Transverse colon (tissue), 4 donors: ENCODE measurements at regions of chr4 and their contacts with region 1.

Region 1: DNA sequence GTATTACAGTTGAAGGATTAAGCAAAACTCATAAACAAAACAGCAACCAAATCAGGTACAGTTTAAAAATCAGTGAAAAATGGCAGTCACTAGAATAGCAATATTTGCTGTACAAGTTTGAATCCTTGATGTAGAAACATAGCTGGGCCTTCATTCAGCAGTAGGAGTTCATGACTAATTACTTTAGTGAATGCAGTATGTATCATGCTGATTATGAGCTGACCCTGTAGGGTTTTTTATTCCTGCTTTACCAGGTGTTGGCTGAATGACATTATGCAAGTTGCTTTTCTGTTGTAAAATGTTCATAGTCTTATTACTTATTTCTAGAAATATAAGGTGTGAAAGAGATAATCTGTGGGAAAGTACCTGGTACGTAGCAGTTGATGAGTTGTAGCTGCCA is 179.6 kb downstream of the CCSER1 start:
- DNase-seq: no peak
- H3K4me3 ChIP-seq: no peak overlapping the region
- H3K27ac ChIP-seq: no peak overlapping the region
- H3K4me1 ChIP-seq: no peaks in the 10 kb centered on the region
- H3K27me3 ChIP-seq: no peaks in the 10 kb centered on the region
- CTCF ChIP-seq: no peak
- EP300 ChIP-seq: no peak
- POLR2A ChIP-seq: no peak

Region 2: DNA sequence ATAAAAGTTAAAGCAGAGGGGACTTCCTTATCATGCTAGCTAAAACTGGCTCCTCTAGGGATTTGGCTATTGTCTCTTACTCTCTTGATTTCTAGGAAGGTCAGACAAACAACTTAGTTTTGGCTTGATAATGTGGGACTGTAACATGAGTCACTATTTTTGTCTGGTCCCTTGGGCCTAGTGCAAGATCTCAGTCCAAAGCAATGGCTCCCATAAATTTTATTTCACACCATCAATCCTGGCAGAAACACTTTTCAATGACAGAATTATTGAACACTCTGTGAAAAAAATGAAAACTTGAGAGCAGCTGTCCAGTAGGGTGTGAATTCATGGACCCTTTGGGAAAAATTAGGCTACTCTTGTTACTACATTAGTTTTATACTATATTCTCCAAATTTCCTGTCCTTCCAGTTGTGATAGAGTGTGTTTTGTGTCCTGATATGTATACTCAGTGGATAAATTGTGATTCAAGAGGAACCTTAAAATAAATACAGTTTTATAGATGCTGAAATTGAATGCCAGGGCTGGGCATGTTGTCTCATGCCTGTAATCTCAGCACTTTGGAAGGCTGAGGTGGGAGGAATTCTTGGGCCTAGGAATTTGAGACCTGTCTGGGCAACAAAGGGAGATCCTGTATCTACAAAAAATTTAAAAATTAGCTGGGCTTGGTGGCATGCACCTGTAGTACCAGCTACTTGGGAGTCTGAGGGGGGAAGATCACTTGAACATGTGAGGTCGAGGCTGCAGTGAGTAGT is 459.1 kb before region 1 on chr4:
- in situ Hi-C with region 1: no loop called
- intact Hi-C with region 1: loop called (anchors 5 kb)
- DNase-seq: no peak
- H3K4me3 ChIP-seq: no peak overlapping the region
- H3K27ac ChIP-seq: no peak overlapping the region
- H3K4me1 ChIP-seq: no peaks in the 10 kb centered on the region
- H3K27me3 ChIP-seq: no peaks in the 10 kb centered on the region
- CTCF ChIP-seq: no peak
- EP300 ChIP-seq: no peak
- POLR2A ChIP-seq: no peak